Heart left ventricle (tissue), 16 donors: ENCODE measurements at regions of chr10 and their contacts with region 1.

Region 1: DNA sequence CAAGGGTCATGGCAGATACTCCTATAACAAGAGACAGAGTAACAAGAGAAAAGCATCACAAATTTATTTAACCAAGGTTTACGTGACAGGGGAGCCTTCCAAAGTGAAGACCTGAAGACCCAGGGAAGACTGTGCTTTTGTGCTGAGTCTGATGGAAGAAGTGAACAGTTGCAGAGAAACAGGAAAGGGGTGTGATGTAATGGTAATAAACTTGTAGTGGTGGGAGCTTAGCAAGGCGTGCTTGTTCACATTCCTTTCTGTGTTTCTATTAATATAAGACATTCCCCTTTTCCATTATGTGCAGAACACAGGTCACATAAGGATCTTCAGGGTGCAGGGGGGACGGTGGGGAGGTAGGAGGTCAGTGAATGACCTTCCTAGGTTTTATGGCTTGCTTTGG is 25.5 kb upstream of the C10orf67 start:
- DNase-seq: no peak
- ATAC-seq: peak; percentile 83 to 90 (median 89)
- H3K4me3 ChIP-seq: no peak overlapping the region
- H3K27ac ChIP-seq: peak overlapping the region in 6 of 12 donors; percentile 7 to 58 (median 24)
- H3K4me1 ChIP-seq: peaks cover 0 to 26% (median 11%) of the 10 kb centered on the region in 12 donors
- H3K27me3 ChIP-seq: no peaks in the 10 kb centered on the region
- CTCF ChIP-seq: no peak
- POLR2A ChIP-seq: no peak

Region 2: DNA sequence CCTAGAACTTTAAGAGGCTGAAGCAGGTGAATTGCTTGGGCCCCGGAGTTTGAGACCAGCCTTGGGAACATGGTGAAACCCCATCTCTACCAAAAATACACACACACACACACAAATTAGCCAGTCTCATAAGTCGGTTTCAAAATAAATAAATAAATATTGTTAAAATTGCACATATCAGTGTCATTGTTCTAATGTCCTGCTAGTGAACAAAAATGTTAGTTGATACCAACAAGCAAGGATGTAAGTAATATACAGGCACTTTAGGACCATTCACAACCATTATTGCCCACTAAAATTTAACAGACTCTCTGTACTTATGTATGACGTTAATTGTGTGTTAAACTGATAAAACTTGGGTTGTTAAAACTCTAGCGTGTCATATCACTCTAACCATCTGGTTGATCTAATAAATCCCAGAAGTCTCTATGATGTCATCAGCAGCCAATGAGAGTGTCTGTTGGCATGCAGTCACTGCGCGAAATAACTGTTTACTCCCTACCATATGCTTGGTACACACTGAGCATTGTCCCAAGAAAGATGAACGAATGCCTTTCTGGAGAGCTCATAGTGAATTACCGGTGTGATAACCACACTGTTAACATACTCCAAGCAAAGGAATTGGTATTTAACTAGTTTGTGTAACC is 38.3 kb after region 1 on chr10:
- intact Hi-C with region 1: loop called in 1 of 10 experiments (anchors 5 kb)
- DNase-seq: no peak
- ATAC-seq: no peak
- H3K4me3 ChIP-seq: no peak overlapping the region
- H3K27ac ChIP-seq: no peak overlapping the region
- H3K4me1 ChIP-seq: peaks cover 0 to 20% (median 4%) of the 10 kb centered on the region in 12 donors
- H3K27me3 ChIP-seq: no peaks in the 10 kb centered on the region
- CTCF ChIP-seq: no peak
- POLR2A ChIP-seq: no peak